ENCODE measurements at regions of chr11 and their contacts with region 1.

Region 1: DNA sequence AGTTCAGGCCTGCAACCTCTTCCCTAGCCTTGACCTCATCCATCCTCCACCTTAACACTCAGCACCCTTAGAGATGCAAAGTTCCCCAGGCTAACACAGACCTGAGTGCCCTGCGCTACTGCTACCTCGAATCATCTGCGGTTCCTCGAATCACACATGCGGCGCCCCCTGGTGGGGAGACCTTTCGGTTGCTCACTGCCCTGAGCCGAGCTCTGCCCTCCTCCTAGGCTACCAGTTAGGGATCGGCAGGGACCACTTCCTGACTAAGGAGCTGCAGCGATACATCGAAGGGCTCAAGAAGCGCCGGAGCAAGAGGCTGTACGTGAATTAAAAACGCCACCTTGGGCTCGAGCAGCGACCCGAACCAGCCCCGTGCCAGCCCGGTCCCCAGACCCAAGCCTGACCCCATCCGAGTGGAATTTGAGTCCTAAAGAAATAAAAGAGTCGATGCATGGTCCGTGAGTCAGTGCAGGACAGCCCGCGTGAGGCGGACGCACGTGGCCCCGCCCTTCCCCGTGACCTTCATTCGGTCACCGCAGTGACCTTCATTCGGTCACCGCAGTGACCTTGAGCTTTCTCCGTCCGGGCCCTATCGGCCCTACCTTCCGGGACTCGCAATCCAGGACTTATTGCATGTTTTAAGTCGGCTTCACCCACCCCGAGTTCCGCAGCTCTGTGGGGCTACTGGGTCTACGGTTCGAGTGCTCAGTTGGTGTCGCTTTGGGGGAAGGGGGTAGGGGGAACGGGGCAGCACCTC is 830 bp upstream of the ESRRA start:
- DNase-seq: peak; percentile 92
- H3K4me3 Mint-ChIP-seq: peak overlapping the region; percentile 99
- H3K27ac Mint-ChIP-seq: peak overlapping the region; percentile 83
- H3K4me1 Mint-ChIP-seq: peaks cover 18% of the 10 kb centered on the region
- H3K27me3 Mint-ChIP-seq: no peaks in the 10 kb centered on the region
- CTCF ChIP-seq: peak; percentile 78

Region 2: DNA sequence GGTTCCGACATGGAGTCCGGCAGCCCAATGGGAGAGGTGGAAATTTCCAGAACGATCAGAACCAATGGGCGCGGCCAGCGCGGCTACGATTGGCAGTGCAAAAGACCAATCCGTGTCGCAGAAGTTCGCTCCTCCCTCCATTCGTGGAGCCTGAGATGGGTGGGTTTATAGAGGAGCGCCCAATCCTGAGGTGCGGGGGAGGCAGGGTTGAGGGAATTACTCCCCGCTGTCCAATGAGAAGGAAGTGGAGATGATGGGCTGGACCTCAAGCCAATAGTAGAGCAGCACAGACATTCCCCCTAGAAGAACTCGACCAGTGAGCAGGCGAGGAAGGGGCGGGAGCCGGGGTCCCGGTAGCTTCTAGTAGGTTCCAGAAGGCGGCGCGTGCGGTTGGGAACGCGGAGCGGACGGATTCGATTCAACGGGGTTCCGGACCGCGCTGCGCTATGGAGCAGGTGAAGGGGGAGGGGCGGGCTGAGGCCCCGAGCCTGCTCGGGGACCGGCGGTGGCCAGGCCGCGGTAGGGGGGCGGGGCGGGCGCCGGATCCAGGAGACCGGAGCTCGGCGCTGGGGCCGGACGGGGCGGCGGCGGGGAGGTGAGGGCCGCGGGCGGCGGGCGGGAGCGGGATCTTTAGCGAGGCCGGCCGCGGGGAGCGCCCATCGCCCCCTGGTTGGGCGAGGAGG is 118.5 kb before region 1 on chr11 and contains the start of gene STIP1:
- CTCF ChIA-PET with region 1: interaction called, 5 read pairs
- POLR2A ChIA-PET with region 1: interaction called, 14 read pairs
- intact Hi-C with region 1: loop called (anchors 5 kb)
- DNase-seq: peak; percentile 100
- H3K4me3 Mint-ChIP-seq: no peak within 1 kb of the TSS
- H3K27ac Mint-ChIP-seq: no peak within 1 kb of the TSS
- H3K4me1 Mint-ChIP-seq: peaks cover 7% of the 10 kb centered on the region
- H3K27me3 Mint-ChIP-seq: no peaks in the 10 kb centered on the region
- CTCF ChIP-seq: peak; percentile 23
- total RNA-seq, gene STIP1: 161 and 171 TPM in 2 replicates

Region 3: DNA sequence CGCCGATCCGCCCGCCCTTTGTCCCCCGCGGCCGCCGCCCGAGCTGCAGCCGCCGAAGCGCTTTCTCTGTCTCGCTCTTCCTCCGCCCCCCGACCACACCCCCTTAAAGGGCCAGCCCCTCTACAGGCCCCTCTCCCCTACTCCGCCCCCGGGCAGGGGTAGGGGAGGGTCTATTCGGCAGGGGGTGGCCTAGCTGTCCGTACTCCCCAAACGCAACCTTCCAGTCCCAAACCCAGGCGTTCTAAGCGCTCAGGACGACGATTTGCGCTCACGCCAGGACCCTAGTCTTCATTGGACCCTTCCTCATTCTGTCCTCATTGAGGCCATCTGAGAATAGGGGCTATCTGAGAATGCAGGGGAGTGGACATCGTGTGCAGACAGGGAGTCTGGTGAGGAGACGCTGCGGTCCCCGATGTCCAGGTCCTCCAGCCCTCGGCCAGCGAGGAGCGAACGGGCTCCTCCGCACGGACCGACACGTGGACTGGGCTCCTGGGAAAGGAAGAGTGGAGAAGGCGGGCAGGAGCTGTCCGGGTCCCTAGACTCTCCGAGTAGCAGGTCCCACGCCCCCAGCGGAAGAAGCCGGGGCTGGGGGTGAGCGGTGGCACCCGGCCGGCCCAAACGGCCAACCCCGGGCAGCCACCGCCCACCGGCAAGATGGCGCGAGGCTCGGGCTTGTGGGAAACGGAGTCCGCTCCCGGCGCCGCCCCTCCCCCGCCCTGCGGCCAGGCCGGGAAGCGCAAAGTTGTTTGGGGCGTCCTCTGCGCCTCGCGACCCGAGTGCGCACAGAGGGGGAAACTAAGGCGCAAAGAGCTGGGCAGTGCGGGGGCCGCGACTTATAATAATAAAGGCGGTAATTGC is 57.4 kb before region 1 on chr11 and contains the start of gene PPP1R14B:
- CTCF ChIA-PET with region 1: interaction called, 65 read pairs
- POLR2A ChIA-PET with region 1: interaction called, 107 read pairs
- intact Hi-C with region 1: loop called (anchors 2 kb)
- DNase-seq: peak; percentile 86
- H3K4me3 Mint-ChIP-seq: peak within 1 kb of the TSS; percentile 93
- H3K27ac Mint-ChIP-seq: peak within 1 kb of the TSS; percentile 69
- H3K4me1 Mint-ChIP-seq: peaks cover 15% of the 10 kb centered on the region
- H3K27me3 Mint-ChIP-seq: no peaks in the 10 kb centered on the region
- CTCF ChIP-seq: no peak
- total RNA-seq, gene PPP1R14B: 583 and 684 TPM in 2 replicates

Region 4: DNA sequence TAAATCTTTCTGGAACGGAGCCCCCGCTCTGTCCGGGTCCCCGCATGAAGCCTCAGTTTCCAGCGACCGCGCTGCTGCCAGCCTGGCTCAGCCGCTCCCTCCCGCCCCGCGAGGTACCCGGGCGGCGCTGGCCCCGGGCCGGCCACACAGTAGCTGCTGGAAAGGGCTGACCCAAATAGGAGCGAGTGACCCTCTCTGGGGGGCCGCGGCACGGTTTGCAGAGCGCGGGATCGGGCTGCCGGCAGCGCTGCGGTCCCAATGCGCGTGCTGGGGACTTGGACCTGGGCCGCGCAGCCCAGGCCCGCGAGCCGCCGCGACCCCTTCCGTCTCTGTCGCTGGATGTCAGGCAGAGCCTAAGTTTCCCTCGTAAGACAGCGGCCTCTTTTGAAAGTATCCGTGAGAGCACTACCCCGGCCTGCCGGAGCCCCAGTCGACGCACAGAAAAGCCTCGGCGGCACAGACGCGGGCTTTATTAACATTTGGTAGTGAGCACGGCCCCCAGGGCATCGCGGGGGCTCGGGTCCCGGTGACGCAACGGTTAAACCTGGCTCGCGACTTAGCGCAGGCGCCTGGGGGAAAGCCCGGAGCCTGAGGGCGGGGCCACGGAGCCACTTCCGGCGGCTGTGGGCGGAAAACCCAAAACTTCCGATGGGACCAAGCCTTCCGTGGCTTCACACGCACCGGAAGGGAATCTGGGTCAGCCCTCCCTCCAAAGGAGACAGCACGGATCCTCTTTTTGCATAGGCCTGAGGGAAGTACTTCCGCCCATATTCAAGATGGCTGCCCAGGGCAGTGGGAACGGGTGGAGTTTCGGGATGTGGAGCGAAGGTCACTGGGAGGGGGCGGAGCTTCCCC is 34.9 kb before region 1 on chr11:
- CTCF ChIA-PET with region 1: interaction called, 70 read pairs
- POLR2A ChIA-PET with region 1: interaction called, 92 read pairs
- intact Hi-C with region 1: loop called (anchors 1 kb)
- DNase-seq: peak; percentile 100
- H3K4me3 Mint-ChIP-seq: peak overlapping the region; percentile 96
- H3K27ac Mint-ChIP-seq: peak overlapping the region; percentile 96
- H3K4me1 Mint-ChIP-seq: peaks cover 23% of the 10 kb centered on the region
- H3K27me3 Mint-ChIP-seq: no peaks in the 10 kb centered on the region
- CTCF ChIP-seq: peak; percentile 1

Region 5: GRCh38 chr11:64291752-64292459 is 12.6 kb before region 1 on chr11:
- CTCF ChIA-PET with region 1: interaction called, 96 read pairs
- POLR2A ChIA-PET with region 1: no interaction called
- intact Hi-C with region 1: loop called (anchors 2 kb)
- DNase-seq: no peak
- H3K4me3 Mint-ChIP-seq: no peak overlapping the region
- H3K27ac Mint-ChIP-seq: no peak overlapping the region
- H3K4me1 Mint-ChIP-seq: peaks cover 11% of the 10 kb centered on the region
- H3K27me3 Mint-ChIP-seq: peaks cover 11% of the 10 kb centered on the region
- CTCF ChIP-seq: no peak

Region 6: DNA sequence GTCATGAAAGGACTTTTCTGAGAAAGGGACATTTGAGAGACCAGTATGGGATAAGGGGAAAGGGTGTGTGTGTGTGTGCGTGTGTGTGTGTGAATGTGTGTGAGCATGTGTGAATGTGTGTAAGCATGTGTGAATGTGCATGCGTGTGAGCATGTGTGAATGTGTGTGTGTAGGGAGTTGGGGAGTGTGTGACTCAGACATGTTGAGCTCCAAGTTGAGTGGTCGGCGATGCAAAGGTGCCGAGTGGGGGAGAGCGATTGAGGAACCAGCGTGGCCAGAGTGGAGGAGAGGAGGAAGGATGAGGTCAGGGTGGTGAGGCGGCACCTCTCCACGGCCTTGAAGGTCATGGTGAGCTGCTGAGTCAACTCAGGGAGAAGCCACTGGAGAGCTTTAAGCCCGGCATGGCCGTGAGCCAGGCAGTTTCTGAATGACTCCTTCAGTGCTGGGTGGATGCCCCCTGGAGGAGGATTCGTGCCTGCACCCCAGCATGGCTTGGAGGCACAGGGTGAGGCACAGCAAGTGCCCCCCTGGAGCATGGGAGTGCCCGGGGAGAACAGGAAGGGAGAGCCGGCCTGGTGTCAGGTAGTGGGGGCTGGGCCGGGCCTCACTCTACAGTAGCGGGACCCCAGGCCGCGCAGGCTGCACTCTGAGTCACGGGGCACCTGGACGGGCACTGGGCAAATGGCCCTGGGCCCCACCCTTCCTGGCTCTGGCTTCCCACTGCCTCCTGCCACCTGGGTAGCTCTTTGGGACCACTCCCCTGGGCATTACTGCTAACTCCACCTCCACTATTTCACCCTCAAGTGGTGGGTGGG is 27.3 kb after region 1 on chr11:
- CTCF ChIA-PET with region 1: interaction called, 27 read pairs
- POLR2A ChIA-PET with region 1: interaction called, 34 read pairs
- intact Hi-C with region 1: no loop called
- DNase-seq: peak; percentile 98
- H3K4me3 Mint-ChIP-seq: peak overlapping the region; percentile 8
- H3K27ac Mint-ChIP-seq: peak overlapping the region; percentile 61
- H3K4me1 Mint-ChIP-seq: peaks cover 20% of the 10 kb centered on the region
- H3K27me3 Mint-ChIP-seq: no peaks in the 10 kb centered on the region
- CTCF ChIP-seq: peak; percentile 79